ENCODE measurements at regions of chr7 and their contacts with region 1.

Region 1: DNA sequence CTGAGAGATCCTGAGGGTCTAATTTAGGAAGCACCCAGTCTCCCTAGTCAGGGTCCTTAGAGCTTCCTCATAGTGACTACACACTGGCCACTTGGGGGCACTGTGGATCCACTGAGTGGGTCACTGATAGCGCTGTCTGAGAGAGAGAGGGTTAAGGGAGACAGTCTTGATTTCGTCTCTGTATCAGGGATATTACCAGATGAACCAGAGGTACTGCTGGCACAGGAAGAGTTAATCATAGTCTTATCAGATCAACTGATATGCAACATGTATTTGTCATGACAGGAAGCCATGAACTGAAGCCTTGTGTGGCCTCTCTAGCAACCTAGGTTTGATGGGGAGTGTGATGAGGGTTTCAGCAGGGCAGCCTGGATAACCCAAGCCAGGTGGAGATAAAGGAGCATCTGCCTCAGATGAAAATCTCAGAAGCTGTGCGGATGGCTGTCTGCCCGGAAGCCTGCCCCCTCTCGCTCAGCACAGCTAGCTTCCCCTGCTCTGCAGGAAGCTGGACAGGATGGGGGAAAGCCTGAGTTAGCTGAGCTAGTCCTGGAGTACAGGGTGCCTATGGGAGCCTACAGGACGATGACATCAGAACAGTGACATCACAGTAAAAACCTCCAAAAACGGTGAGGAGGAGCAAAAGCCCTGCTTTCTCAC is 214.0 kb upstream of the PRSS1 start:
- DNase-seq: peak; percentile 69
- H3K4me3 ChIP-seq: no peak overlapping the region
- H3K27ac ChIP-seq: no peak overlapping the region
- H3K27me3 ChIP-seq: no peaks in the 10 kb centered on the region
- CTCF ChIP-seq: peak; percentile 92

Region 2: GRCh38 chr7:142496545-142497041 is 38.7 kb before region 1 on chr7:
- CTCF ChIA-PET with region 1: interaction called, 19 read pairs
- POLR2A ChIA-PET with region 1: no interaction called
- DNase-seq: no peak
- H3K4me3 ChIP-seq: no peak overlapping the region
- H3K27ac ChIP-seq: no peak overlapping the region
- H3K27me3 ChIP-seq: peaks cover 5% of the 10 kb centered on the region
- CTCF ChIP-seq: peak; percentile 70

Region 3: DNA sequence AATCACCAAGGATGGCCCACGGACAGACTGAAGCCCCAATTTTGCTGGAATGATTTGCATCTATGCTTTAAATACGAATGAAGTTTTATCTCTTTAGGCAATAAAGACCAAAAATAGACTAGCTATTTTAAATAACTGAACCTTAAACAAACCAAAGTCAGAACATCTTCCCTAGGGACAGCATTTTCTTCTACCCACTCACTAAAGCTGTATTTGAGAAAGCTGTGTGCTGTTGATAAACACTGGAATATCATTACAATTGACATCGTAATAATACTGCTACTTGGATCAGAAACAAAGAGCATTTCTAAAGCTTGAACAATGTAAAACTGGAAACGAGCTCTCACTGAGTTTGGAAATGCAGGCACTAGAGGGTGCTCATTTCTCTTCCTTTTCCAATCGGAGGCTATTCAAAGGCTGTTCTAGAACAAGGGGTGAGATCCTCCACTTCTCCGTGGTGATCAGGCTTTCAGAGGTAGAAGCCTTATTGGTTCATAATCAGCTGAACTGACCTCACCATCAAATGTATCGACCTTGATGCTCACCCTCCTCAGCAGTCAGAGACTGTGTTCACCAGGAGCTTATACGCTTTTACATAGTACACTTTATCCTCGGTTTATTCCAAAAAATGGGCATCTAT is 11.3 kb before region 1 on chr7:
- CTCF ChIA-PET with region 1: interaction called, 58 read pairs
- POLR2A ChIA-PET with region 1: no interaction called
- DNase-seq: no peak
- H3K4me3 ChIP-seq: no peak overlapping the region
- H3K27ac ChIP-seq: no peak overlapping the region
- H3K27me3 ChIP-seq: peaks cover 15% of the 10 kb centered on the region
- CTCF ChIP-seq: peak; percentile 32; the same call in 1 of the 2 replicates

Region 4: GRCh38 chr7:142603870-142604448 is 68.7 kb after region 1 on chr7:
- CTCF ChIA-PET with region 1: interaction called, 55 read pairs
- POLR2A ChIA-PET with region 1: no interaction called
- DNase-seq: no peak
- H3K4me3 ChIP-seq: no peak overlapping the region; the same call in 1 of the 2 replicates
- H3K27ac ChIP-seq: no peak overlapping the region
- H3K27me3 ChIP-seq: peaks cover 2% of the 10 kb centered on the region
- CTCF ChIP-seq: peak; percentile 87